Prostate gland (tissue), 2 donors: ENCODE measurements at regions of chr19 and their contacts with region 1.

Region 1: DNA sequence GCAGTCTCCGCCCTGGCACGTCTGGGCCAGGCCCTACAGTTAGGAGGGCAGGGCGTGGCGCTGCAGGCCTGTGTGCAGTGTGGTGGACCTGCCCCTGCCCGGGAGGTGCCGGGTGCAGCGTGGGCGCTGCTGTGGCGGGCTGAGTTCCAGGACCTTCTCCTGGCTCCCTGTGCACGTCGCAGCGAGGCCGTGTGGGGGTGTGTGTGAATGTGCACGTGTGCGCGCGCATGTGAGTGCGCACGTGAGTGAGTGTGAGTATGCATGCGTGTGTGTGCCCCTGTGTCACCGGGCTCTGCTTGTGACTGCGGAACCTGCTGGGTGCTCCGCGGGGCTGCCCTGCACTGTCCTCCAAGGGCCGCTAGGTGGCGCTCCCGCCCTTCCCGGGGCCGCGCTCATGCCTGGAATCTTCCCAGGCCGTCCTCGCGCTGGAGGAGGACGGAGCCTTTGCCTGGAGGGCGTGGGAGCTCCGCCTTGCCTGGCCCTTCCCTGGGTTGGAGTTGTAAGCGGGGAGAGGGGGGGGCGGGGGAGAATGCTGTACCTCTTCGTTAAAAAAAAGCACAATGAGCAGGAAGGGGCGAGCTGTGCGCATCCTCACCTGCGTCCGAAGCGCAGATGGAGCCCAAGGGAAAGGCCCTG is 79.3 kb downstream of the KDM4B start:
- DNase-seq: peak; percentile 79
- H3K4me3 ChIP-seq: no peak overlapping the region
- H3K27ac ChIP-seq: peak overlapping the region; percentile 67 to 74
- H3K4me1 ChIP-seq: peaks cover 31% of the 10 kb centered on the region
- H3K27me3 ChIP-seq: no peaks in the 10 kb centered on the region
- CTCF ChIP-seq: peak; percentile 99
- POLR2A ChIP-seq: no peak

Region 2: GRCh38 chr19:5131031-5131505 is 82.9 kb after region 1 on chr19:
- intact Hi-C with region 1: loop called (anchors 5 kb)
- DNase-seq: no peak
- H3K4me3 ChIP-seq: no peak overlapping the region
- H3K27ac ChIP-seq: peak overlapping the region in 1 of 2 donors; percentile 66
- H3K4me1 ChIP-seq: peaks cover 9% of the 10 kb centered on the region
- H3K27me3 ChIP-seq: no peaks in the 10 kb centered on the region
- CTCF ChIP-seq: no peak
- POLR2A ChIP-seq: no peak

Region 3: DNA sequence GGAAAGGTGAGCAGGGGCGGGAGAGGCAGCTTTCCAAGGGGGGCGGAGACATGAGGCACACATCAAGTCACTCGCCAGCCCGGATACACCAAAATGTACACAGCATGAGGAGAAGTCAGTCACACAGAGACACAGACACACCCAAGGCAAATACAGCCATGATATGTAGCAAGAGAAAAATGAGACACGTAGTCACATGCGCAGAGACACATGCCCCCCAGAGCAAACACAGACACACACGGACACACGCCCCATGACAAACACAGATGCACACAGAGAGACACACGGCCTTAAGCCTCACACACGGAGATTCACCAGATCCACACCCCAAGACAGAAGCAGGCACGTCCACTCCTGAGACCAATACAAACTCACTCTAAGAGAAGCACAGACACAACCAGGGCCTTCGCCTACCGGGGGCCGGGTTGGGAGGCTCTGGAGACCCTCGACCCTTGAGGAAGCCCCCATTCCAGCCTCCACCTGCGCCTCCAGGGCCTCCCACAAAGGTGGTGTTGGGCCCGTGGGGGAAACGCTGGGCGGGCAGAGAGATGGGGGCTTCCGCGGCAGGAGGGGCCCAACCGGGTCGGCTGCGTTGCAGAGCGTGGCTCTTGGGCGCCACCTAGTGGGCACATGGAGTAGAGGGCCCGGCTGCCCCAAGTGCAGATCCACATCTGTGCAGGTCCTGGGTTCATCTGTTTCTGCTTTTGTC is 529.7 kb after region 1 on chr19:
- intact Hi-C with region 1: loop called (anchors 5 kb)
- DNase-seq: peak; percentile 86
- H3K4me3 ChIP-seq: peak overlapping the region; percentile 14 to 30
- H3K27ac ChIP-seq: peak overlapping the region; percentile 82 to 90
- H3K4me1 ChIP-seq: peaks cover 16% of the 10 kb centered on the region
- H3K27me3 ChIP-seq: no peaks in the 10 kb centered on the region
- CTCF ChIP-seq: peak; percentile 97 to 99 (median 98)
- POLR2A ChIP-seq: peak; percentile 29